H1 (cell line): ENCODE measurements at regions of chr1 and their contacts with region 1.

Region 1: DNA sequence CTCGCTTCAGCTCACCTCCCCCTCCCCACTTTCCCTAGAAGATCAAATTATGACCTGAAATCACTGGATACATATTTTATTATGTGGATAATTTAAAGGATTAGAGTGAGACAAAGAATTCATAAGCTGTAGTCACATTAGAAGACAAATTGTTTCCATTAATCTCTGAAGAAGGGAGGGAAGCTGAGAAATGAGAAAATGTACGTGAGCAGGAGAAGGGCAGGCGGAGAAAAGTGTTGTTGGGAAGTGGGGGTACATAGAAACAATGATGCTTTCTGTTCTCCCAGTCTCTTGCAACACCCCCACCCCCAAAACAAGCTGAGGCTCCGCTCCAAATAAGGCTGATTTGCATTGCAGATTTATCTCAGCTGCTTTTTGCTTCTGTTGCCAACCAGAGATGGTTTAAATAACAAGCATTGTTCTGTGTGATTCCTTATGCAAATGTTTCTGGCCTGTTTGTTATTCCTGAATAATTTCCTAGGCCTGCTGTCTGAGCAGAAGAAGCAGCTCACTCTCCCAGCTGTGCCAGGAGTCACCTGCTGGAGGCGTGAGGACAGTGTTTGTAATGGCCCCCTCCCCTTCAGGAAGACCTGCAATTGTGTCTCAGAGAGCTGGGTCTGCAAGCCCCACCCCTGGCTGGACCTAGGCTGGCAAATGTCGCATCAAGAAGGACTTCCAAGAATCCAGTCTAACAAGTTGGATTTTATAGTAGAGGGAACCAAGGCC is 121.8 kb upstream of the TNR start:
- DNase-seq: peak; percentile 65 to 71
- H3K4me3 ChIP-seq: peak overlapping the region in 3 of 4 experiments; percentile 8 to 42 (median 16); a peak in 3 of 8 replicates
- H3K27ac ChIP-seq: peak overlapping the region; percentile 4; the same call in 1 of the 2 replicates
- H3K4me1 ChIP-seq: peaks cover 18 to 39% (median 30%) of the 10 kb centered on the region in 4 experiments
- H3K27me3 ChIP-seq: peaks cover 0 to 6% (median 3%) of the 10 kb centered on the region in 4 experiments; a peak in 4 of 7 replicates
- CTCF ChIP-seq: peak; percentile 27 to 55 (median 52); a peak in 3 of 4 replicates
- EP300 ChIP-seq: no peak
- POLR2A ChIP-seq: no peak
- RAD21 ChIP-seq: peak; percentile 36 to 47; a peak in 3 of 4 replicates

Region 2: DNA sequence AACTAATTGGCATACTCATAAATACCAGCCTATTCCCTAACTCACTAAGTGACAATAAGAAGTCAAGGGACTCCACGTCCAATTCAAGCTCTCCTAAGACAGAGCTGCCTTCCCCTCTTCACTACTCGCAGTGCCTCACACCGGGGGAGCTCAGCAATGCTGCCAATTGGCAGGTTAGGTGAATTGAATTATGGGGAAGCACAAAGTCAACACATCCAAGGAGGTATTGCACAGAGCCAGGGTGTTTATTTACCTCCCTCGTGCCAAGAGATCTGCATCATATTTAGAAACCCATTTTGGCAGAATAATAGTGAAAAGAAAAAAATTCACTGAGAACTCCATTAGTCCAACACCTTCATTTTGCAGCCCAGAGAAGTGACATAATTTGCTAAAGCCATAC is 101.4 kb before region 1 on chr1:
- CTCF ChIA-PET with region 1: no interaction called
- POLR2A ChIA-PET with region 1: no interaction called
- DNase-seq: no peak
- H3K4me3 ChIP-seq: no peak overlapping the region
- H3K27ac ChIP-seq: no peak overlapping the region
- H3K4me1 ChIP-seq: no peaks in the 10 kb centered on the region
- H3K27me3 ChIP-seq: no peaks in the 10 kb centered on the region
- CTCF ChIP-seq: no peak
- EP300 ChIP-seq: no peak
- POLR2A ChIP-seq: no peak
- RAD21 ChIP-seq: no peak

Region 3: DNA sequence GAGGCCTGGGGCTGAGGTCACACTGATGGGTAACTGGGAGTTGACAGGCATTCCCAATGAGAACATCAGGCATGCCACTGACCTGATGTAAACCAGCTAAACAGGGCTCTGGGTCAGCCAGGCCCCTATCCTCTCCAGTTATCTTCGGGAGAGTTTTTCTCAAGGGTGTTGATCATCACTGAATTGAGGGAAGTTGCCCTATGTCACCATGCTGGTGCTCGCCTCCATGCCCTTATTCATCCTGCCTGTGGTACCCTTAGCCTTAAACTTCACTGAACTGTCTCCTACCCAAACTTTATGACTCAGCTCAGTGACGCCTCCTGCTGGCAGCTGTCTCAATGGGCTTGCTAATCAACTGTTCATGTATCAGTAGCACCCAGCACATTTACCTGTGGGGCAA is 41.1 kb before region 1 on chr1:
- CTCF ChIA-PET with region 1: interaction called, 15 read pairs
- POLR2A ChIA-PET with region 1: no interaction called
- DNase-seq: peak; percentile 50 to 90
- H3K4me3 ChIP-seq: no peak overlapping the region
- H3K27ac ChIP-seq: no peak overlapping the region
- H3K4me1 ChIP-seq: peaks cover 0 to 1% (median 0%) of the 10 kb centered on the region in 4 experiments; a peak in 1 of 7 replicates
- H3K27me3 ChIP-seq: no peaks in the 10 kb centered on the region
- CTCF ChIP-seq: peak; percentile 61 to 92 (median 83)
- EP300 ChIP-seq: no peak
- POLR2A ChIP-seq: no peak
- RAD21 ChIP-seq: peak; percentile 83 to 89

Region 4: DNA sequence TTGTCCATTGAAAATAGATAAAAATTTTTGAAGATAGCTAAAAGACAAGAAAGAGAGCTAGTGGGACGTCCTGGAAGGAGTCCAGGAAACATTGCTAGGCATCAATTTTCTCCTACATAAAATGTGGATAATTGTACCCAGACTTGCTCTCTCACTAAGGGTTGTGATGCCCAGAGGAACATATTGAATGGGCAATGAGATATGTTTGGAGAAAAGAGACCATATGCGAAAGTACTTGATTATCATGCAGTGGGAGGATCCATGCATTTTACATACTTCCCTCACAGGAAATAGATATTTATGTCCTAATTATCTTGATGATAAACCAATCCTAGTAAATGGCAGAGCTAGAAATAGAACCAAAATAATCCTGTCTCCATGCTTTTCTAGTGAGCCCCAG is 13.5 kb before region 1 on chr1:
- CTCF ChIA-PET with region 1: interaction called, 22 read pairs
- POLR2A ChIA-PET with region 1: interaction called, 6 read pairs
- DNase-seq: no peak
- H3K4me3 ChIP-seq: no peak overlapping the region
- H3K27ac ChIP-seq: no peak overlapping the region
- H3K4me1 ChIP-seq: peaks cover 0 to 4% (median 0%) of the 10 kb centered on the region in 4 experiments; a peak in 2 of 7 replicates
- H3K27me3 ChIP-seq: no peaks in the 10 kb centered on the region
- CTCF ChIP-seq: no peak
- EP300 ChIP-seq: no peak
- POLR2A ChIP-seq: no peak
- RAD21 ChIP-seq: no peak

Region 5: DNA sequence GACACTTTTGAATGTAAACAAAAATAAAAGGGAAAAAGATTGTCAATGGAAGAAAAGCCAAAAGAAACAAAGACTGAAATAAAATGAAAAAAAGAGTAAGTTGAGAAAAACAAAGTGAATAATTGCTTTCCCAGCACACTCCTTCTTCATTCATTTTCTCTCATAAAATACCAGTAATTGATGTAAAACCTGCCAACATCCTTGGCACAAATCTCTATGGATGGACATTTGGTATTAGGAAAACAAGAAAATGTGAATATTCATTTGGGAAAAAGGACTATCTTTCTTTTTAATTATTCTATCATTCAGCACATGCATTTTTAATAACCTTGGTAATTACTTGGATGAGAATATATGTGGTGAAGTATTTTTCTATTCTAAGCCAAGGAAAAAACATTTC is 82.6 kb after region 1 on chr1:
- CTCF ChIA-PET with region 1: no interaction called
- POLR2A ChIA-PET with region 1: no interaction called
- DNase-seq: no peak
- H3K4me3 ChIP-seq: no peak overlapping the region
- H3K27ac ChIP-seq: no peak overlapping the region
- H3K4me1 ChIP-seq: no peaks in the 10 kb centered on the region
- H3K27me3 ChIP-seq: no peaks in the 10 kb centered on the region
- CTCF ChIP-seq: no peak
- EP300 ChIP-seq: no peak
- POLR2A ChIP-seq: no peak
- RAD21 ChIP-seq: no peak